ENCODE measurements at regions of chr5 and their contacts with region 1.

Region 1: DNA sequence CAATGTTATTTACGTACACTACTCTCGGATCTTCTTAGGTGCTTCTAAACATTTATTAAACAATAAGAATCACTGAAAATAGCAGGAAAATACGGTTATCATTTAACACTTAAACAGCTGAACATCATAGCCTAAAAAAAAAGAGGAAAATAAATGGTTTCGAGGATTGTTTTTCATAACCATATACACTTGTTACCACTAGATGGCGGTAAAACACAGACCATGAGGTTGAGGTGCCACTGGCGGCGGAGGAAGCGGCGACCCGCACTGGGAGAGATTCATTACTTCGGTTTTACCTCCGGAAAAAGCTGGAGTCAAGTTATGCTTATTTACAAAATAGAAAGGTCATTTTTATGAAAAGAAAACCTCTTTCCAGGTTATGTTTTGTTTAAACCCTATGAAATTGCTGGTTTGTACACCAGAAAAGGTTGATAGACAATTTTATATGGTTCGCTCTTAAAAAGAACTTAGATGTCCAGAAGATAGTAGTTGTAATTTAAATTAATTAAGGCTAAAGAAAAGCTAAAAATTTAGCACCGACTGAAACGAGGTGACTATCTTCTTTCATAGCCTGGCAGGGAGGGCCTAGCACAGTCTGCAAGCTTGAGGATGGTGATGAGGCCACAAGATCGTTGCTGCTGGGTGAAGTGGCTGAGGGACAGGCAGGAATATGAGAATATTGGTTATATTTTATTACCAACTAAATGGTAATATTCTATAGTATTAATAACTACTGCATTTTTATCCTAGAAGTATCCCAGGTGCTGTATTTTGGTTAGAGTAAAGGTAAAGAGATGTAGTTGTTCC is 605.7 kb downstream of the RAB3C start:
- DNase-seq: peak; percentile 71
- H3K4me3 Mint-ChIP-seq: no peak overlapping the region
- H3K27ac Mint-ChIP-seq: no peak overlapping the region
- H3K4me1 Mint-ChIP-seq: no peaks in the 10 kb centered on the region
- H3K27me3 Mint-ChIP-seq: peaks cover 5% of the 10 kb centered on the region

Region 2: GRCh38 chr5:59143926-59144333 is 44.7 kb before region 1 on chr5:
- CTCF ChIA-PET with region 1: no interaction called
- intact Hi-C with region 1: no loop called
- DNase-seq: no peak
- H3K4me3 Mint-ChIP-seq: no peak overlapping the region
- H3K27ac Mint-ChIP-seq: no peak overlapping the region
- H3K4me1 Mint-ChIP-seq: peaks cover 2% of the 10 kb centered on the region
- H3K27me3 Mint-ChIP-seq: no peaks in the 10 kb centered on the region

Region 3: DNA sequence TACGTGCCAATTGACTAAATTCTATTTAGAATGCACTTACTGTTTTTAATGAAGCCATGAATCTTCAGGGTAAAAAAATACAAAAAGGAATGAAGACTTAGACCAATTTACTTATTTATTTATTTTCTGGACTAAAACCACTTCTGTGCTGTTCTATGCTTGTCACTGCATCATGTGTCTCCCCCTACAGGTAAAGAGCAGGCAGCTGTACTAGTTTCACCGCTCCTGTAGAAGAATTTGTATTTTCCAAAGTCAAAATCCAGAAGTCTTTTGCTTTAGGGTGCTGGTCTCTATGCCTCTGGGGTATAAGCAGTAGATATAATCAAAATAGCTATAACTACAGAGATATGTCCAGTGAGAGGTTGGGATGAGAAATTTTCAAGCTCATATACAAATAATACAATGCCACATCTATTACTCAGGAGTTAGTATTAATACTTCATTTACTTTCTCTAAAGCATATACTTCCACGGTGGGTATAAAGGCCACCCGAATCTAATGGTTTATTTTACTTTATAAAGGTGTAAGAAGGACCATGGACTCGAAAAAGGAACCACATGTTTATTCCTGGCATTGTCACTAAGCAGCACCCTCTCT is 14.3 kb before region 1 on chr5:
- CTCF ChIA-PET with region 1: interaction called, 17 read pairs
- intact Hi-C with region 1: no loop called
- DNase-seq: peak; percentile 48
- H3K4me3 Mint-ChIP-seq: no peak overlapping the region
- H3K27ac Mint-ChIP-seq: no peak overlapping the region
- H3K4me1 Mint-ChIP-seq: peaks cover 10% of the 10 kb centered on the region
- H3K27me3 Mint-ChIP-seq: no peaks in the 10 kb centered on the region

Region 4: GRCh38 chr5:59367791-59368394 is 179.3 kb after region 1 on chr5:
- CTCF ChIA-PET with region 1: interaction called, 84 read pairs
- intact Hi-C with region 1: loop called (anchors 1 kb)
- DNase-seq: peak; percentile 73
- H3K4me3 Mint-ChIP-seq: no peak overlapping the region
- H3K27ac Mint-ChIP-seq: no peak overlapping the region
- H3K4me1 Mint-ChIP-seq: peaks cover 5% of the 10 kb centered on the region
- H3K27me3 Mint-ChIP-seq: peaks cover 3% of the 10 kb centered on the region

Region 5: GRCh38 chr5:59390074-59390659 is 201.5 kb after region 1 on chr5:
- CTCF ChIA-PET with region 1: interaction called, 19 read pairs
- intact Hi-C with region 1: no loop called
- DNase-seq: peak; percentile 22
- H3K4me3 Mint-ChIP-seq: no peak overlapping the region
- H3K27ac Mint-ChIP-seq: no peak overlapping the region
- H3K4me1 Mint-ChIP-seq: no peaks in the 10 kb centered on the region
- H3K27me3 Mint-ChIP-seq: peaks cover 6% of the 10 kb centered on the region

Region 6: DNA sequence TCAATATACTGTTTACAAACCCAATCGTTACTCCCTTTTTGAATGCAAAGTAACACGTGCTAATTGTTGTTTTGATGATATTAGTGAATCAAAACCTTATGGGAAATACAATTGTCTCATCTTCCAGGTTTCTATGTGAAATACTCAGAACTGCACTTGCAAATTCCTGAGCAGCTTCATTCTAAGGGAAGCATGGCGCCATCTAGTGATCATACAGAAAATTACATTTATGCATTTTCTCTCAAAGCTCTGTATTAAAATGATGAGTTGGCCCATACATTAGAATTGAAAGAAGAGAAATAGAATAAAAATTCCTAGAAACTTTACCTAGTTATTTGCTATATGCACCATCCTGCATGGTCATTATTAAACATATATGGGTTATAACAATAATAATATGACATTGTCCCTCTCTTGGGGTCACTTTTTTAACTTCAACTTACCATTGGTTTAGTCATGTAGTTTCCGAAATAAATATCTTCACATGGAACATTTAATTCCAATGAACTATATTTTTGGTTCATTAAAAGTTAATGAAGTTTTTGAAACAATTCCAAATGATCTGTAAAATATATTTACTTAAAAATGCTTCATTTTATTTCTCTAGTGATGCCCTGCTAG is 484.9 kb after region 1 on chr5:
- CTCF ChIA-PET with region 1: interaction called, 3 read pairs
- intact Hi-C with region 1: loop called (anchors 1 kb)
- DNase-seq: no peak
- H3K4me3 Mint-ChIP-seq: no peak overlapping the region
- H3K27ac Mint-ChIP-seq: no peak overlapping the region
- H3K4me1 Mint-ChIP-seq: no peaks in the 10 kb centered on the region
- H3K27me3 Mint-ChIP-seq: no peaks in the 10 kb centered on the region

Measured in activated naive CD4-positive, alpha-beta T cell treated with anti-CD3 and anti-CD28 coated beads for 36 hours (primary cell).